ENCODE measurements at regions of chrX and their contacts with region 1.

Region 1: DNA sequence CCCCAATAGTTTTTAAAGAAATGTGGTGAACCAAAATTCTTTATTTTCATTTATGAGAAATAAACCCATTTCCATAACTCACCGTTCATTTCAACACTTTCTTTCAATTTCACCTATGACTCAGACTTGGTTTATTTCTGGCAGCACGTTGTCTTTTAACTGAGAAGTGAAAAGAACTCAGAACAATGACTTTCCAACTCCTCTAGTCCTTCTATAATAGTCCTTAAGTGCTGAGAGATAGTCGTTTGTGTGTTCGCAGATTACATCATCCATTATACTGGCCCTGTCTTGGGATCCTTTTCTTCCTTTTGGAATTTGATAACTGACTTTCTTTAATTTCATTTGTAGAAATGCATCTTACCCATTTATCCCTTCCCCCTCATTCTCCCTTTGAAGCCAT is 113.6 kb downstream of the GLUD2 start:
- DNase-seq: no peak
- ATAC-seq: peak; percentile 79
- H3K4me3 Mint-ChIP-seq: peak overlapping the region; percentile 50
- H3K27ac Mint-ChIP-seq: peak overlapping the region; percentile 89
- H3K4me1 Mint-ChIP-seq: peaks cover 46% of the 10 kb centered on the region
- H3K27me3 Mint-ChIP-seq: peaks cover 3% of the 10 kb centered on the region

Region 2: GRCh38 chrX:120697053-120697452 is 463.9 kb before region 1 on chrX:
- CTCF ChIA-PET with region 1: no interaction called
- POLR2A ChIA-PET with region 1: no interaction called
- intact Hi-C with region 1: loop called in 1 of 2 experiments (anchors 5 kb)
- DNase-seq: peak; percentile 64
- ATAC-seq: peak; percentile 91
- H3K4me3 Mint-ChIP-seq: peak overlapping the region; percentile 12
- H3K27ac Mint-ChIP-seq: peak overlapping the region; percentile 91
- H3K4me1 Mint-ChIP-seq: peaks cover 18% of the 10 kb centered on the region
- H3K27me3 Mint-ChIP-seq: no peaks in the 10 kb centered on the region

Region 3: GRCh38 chrX:120790118-120790517 is 370.9 kb before region 1 on chrX:
- CTCF ChIA-PET with region 1: no interaction called
- POLR2A ChIA-PET with region 1: no interaction called
- intact Hi-C with region 1: loop called in 1 of 2 experiments (anchors 5 kb)
- DNase-seq: peak; percentile 27
- ATAC-seq: peak; percentile 81
- H3K4me3 Mint-ChIP-seq: peak overlapping the region; percentile 50
- H3K27ac Mint-ChIP-seq: peak overlapping the region; percentile 95
- H3K4me1 Mint-ChIP-seq: peaks cover 28% of the 10 kb centered on the region
- H3K27me3 Mint-ChIP-seq: no peaks in the 10 kb centered on the region

Region 4: GRCh38 chrX:121106484-121107235 is 54.3 kb before region 1 on chrX:
- CTCF ChIA-PET with region 1: no interaction called
- POLR2A ChIA-PET with region 1: no interaction called
- intact Hi-C with region 1: loop called in 1 of 2 experiments (anchors 2 kb)
- DNase-seq: peak; percentile 16
- ATAC-seq: peak; percentile 58
- H3K4me3 Mint-ChIP-seq: no peak overlapping the region
- H3K27ac Mint-ChIP-seq: no peak overlapping the region
- H3K4me1 Mint-ChIP-seq: peaks cover 4% of the 10 kb centered on the region
- H3K27me3 Mint-ChIP-seq: no peaks in the 10 kb centered on the region

Measured in activated CD4-positive, alpha-beta T cell treated with anti-CD3 and anti-CD28 coated beads for 36 hours (primary cell).